ENCODE measurements at regions of chr10 and their contacts with region 1.

Region 1: GRCh38 chr10:80459047-80459931 is 5.2 kb downstream of the TSPAN14 start:
- DNase-seq: peak; percentile 66
- ATAC-seq: peak; percentile 11
- H3K4me3 ChIP-seq: peak overlapping the region in 3 of 5 experiments; percentile 8 to 34 (median 12)
- H3K4me3 Mint-ChIP-seq: peak overlapping the region; percentile 68
- H3K27ac ChIP-seq: peak overlapping the region; percentile 48 to 58
- H3K27ac Mint-ChIP-seq: peak overlapping the region; percentile 90
- H3K4me1 ChIP-seq: peaks cover 85 to 94% of the 10 kb centered on the region in 2 donors
- H3K4me1 Mint-ChIP-seq: peaks cover 89% of the 10 kb centered on the region
- H3K27me3 ChIP-seq: no peaks in the 10 kb centered on the region
- H3K27me3 Mint-ChIP-seq: no peaks in the 10 kb centered on the region
- CTCF ChIP-seq: no peak

Region 2: GRCh38 chr10:80414142-80414895 is 45.0 kb before region 1 on chr10:
- CTCF ChIA-PET with region 1: no interaction called
- POLR2A ChIA-PET with region 1: no interaction called
- intact Hi-C with region 1: no loop called
- DNase-seq: no peak
- ATAC-seq: no peak
- H3K4me3 ChIP-seq: no peak overlapping the region
- H3K4me3 Mint-ChIP-seq: no peak overlapping the region
- H3K27ac ChIP-seq: no peak overlapping the region
- H3K27ac Mint-ChIP-seq: no peak overlapping the region
- H3K4me1 ChIP-seq: peaks cover 0 to 2% of the 10 kb centered on the region in 2 donors
- H3K4me1 Mint-ChIP-seq: peaks cover 3% of the 10 kb centered on the region
- H3K27me3 ChIP-seq: no peaks in the 10 kb centered on the region
- H3K27me3 Mint-ChIP-seq: no peaks in the 10 kb centered on the region
- CTCF ChIP-seq: no peak

Region 3: DNA sequence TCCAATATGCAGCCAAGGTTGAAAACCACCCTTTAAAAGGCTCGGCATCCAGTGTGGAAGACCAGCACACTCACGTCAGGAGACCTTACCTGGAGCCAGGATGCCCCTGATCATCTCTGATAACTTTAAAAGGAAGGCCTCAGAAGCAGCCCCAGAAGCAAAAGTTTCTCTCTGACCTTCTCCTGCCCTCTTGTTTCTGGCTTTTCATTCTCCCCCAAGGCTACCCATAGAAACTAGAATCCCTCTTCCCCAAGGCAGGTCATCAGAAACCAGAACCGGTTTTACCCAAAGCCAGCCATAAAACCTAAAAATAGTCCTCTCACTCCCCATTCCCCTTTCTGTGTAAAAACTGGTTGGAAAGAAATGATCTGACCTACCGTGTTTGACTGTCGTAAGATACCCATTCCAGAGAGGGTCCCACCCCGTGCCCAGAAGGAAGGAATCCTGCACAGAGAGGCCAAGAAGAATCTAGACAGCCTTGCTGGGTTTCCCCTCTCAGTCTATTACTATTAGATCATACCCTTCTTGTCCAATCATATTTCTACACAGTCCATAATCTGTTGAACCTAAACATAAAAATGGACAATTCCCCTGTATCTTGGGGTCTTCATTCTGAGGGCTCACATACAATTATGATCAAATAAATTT is 22.7 kb before region 1 on chr10:
- CTCF ChIA-PET with region 1: no interaction called
- POLR2A ChIA-PET with region 1: no interaction called
- intact Hi-C with region 1: no loop called
- DNase-seq: no peak
- ATAC-seq: no peak
- H3K4me3 ChIP-seq: no peak overlapping the region
- H3K4me3 Mint-ChIP-seq: no peak overlapping the region
- H3K27ac ChIP-seq: no peak overlapping the region
- H3K27ac Mint-ChIP-seq: no peak overlapping the region
- H3K4me1 ChIP-seq: no peaks in the 10 kb centered on the region
- H3K4me1 Mint-ChIP-seq: no peaks in the 10 kb centered on the region
- H3K27me3 ChIP-seq: no peaks in the 10 kb centered on the region
- H3K27me3 Mint-ChIP-seq: peaks cover 5% of the 10 kb centered on the region
- CTCF ChIP-seq: no peak

Region 4: GRCh38 chr10:80472234-80473095 is 13.2 kb after region 1 on chr10:
- CTCF ChIA-PET with region 1: interaction called, 8 read pairs
- POLR2A ChIA-PET with region 1: interaction called, 13 read pairs
- intact Hi-C with region 1: loop called (anchors 1 kb)
- DNase-seq: peak; percentile 63
- ATAC-seq: peak; percentile 88
- H3K4me3 ChIP-seq: no peak overlapping the region
- H3K4me3 Mint-ChIP-seq: peak overlapping the region; percentile 60
- H3K27ac ChIP-seq: peak overlapping the region; percentile 49 to 75
- H3K27ac Mint-ChIP-seq: peak overlapping the region; percentile 89
- H3K4me1 ChIP-seq: peaks cover 41 to 48% of the 10 kb centered on the region in 2 donors
- H3K4me1 Mint-ChIP-seq: peaks cover 61% of the 10 kb centered on the region
- H3K27me3 ChIP-seq: no peaks in the 10 kb centered on the region
- H3K27me3 Mint-ChIP-seq: no peaks in the 10 kb centered on the region
- CTCF ChIP-seq: no peak